ENCODE measurements at regions of chr11 and their contacts with region 1.

Region 1: GRCh38 chr11:355581-356458 is 13.5 kb upstream of the B4GALNT4 start:
- DNase-seq: peak; percentile 97 to 99
- ATAC-seq: peak; percentile 94
- H3K4me3 ChIP-seq: no peak overlapping the region
- H3K27ac ChIP-seq: peak overlapping the region; percentile 88 to 95
- H3K4me1 ChIP-seq: no peaks in the 10 kb centered on the region
- H3K27me3 ChIP-seq: no peaks in the 10 kb centered on the region

Region 2: DNA sequence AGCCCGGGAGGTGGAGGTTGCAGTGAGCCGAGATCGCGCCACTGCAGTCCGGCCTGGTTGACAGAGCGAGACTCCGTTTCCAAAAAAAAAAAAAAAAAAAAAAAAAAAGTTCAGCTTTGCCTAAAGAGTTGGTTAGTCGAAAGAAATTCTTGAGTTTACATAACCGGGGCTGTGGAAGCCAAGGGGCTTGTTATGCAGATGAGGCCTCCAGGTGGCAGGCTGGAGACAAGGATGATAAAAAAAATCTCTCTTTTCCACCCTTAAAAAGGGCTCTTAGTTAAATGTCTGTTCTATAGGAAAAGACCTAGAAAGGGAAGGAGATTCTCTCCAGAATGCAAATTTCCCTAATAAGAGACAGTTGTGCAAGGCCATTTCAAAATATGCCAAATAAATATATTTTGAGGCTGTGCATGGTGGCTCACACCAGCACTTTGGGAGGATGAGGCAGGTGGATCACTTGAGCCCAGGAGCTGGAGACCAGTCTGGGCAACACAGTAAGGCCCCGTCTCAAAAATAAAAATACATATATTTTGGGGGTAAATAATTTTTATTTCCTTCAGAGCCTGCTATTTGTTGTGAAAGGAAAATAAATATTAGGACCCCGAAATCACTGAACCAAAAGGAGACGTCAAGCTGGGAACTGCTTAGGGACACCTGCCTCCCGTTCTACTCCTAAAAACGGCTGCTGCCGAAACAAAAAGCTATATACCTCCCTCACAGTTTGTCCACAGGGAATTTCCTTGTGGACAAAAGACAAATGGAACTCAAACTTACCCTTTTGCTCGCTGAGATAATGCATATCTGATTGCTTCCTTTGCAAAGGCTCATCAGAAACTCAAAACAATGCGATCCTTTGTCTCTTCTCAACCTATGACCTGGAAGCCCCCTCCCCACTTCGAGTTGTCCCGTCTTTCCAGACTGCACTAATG is 50.6 kb before region 1 on chr11:
- intact Hi-C with region 1: loop called (anchors 2 to 5 kb)
- DNase-seq: peak in 1 of 2 donors; percentile 73
- ATAC-seq: no peak
- H3K4me3 ChIP-seq: no peak overlapping the region
- H3K27ac ChIP-seq: no peak overlapping the region
- H3K4me1 ChIP-seq: no peaks in the 10 kb centered on the region
- H3K27me3 ChIP-seq: no peaks in the 10 kb centered on the region

Region 3: DNA sequence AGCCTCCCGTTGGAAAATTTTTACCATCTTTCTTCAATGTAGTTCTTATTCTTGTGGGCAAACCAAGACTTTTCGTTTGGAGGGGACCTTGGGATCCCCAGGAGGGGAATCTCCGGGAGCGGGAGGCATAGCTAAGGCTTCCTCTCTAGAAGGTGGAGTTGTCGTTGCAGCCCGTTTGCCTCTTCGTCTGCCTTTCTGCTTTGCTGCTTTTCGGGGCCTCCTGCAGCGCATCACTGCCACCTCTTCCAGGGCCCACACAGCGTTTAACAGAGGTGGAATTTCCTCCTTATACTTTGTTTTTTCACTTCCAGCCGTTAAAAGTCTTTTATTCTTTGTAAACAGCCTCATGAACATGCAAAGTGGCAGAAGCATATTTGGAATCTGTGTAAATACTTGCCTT is 31.7 kb before region 1 on chr11:
- intact Hi-C with region 1: loop called in 1 of 2 experiments (anchors 5 kb)
- DNase-seq: peak in 1 of 2 donors; percentile 41
- ATAC-seq: no peak
- H3K4me3 ChIP-seq: no peak overlapping the region
- H3K27ac ChIP-seq: no peak overlapping the region
- H3K4me1 ChIP-seq: no peaks in the 10 kb centered on the region
- H3K27me3 ChIP-seq: no peaks in the 10 kb centered on the region

Measured in aorta (tissue), 5 donors.